SK-N-SH (cell line): ENCODE measurements at regions of chr15 and their contacts with region 1.

Region 1: DNA sequence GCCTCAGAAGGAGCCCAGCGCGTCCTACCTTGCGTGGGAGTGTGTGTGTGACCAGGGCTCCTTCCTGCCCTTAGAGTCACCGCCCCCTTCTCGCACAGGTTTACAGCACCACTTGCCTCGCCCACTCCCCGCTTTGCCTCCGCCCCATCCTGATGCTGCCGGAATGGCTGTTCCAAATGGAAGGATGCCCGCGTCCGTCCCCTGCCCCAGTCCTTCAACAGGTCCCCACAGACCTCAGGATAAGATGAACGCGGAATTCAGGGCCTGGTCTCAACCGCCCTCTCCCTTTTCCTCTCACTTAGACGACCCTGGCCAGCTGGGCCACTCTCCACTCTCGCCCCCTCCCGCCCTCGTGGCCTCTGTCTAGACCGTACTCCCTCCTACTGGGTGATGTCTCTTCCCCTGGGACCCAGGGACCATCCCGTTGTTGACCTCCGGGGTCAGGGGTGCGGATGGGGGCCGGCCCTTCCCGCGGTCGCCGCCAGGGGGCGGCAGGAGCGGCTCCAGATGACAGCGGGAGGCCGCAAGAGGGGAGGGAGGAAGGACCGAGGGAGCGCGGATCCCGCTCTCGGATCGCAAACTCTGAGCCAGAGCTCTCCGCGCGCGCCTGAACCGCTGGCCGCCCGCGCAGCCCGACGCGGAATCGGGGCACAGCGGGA is at the start of gene THSD4:
- DNase-seq: peak; percentile 96
- H3K4me3 ChIP-seq: peak within 1 kb of the TSS; percentile 61 to 87
- H3K27ac ChIP-seq: peak within 1 kb of the TSS; percentile 55 to 78
- H3K4me1 ChIP-seq: peaks cover 0 to 12% of the 10 kb centered on the region in 2 experiments; a peak in 1 of 4 replicates
- H3K27me3 ChIP-seq: no peaks in the 10 kb centered on the region
- CTCF ChIP-seq: peak; percentile 94
- EP300 ChIP-seq: 0 out of 4 replicates have a peak, but pooled peaks of 1 of the 2 experiments have one; percentile 11
- RAD21 ChIP-seq: peak; percentile 73
- polyA plus RNA-seq, gene THSD4: 64.8 and 79.1 TPM in 2 replicates

Region 2: DNA sequence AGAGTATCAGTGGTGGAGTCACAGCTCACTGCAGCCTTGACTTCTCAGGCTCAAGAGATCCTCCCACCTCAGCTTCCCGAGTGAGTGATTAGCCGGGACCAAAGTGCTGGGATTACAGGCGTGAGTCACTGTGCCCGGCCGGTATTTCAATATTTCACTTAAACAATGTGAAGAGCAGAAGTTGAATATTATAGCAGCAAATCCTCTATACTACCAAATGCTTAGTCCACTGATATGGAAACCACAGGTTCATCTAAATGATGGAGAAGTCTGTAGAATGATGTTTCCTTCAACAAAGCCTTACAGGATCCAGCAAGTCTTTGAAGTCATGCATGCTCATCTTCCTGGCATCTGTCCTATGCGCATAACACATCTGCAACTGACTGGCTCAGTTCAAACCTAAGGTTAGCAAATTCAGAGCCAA is 331.4 kb before region 1 on chr15:
- CTCF ChIA-PET with region 1: no interaction called
- POLR2A ChIA-PET with region 1: no interaction called
- DNase-seq: no peak
- H3K4me3 ChIP-seq: 0 out of 4 replicates have a peak overlapping the region, but pooled peaks of 1 of the 2 experiments have one; percentile 0
- H3K27ac ChIP-seq: peak overlapping the region in 1 of 2 experiments; percentile 51; a peak in 2 of 4 replicates
- H3K4me1 ChIP-seq: peaks cover 0 to 18% of the 10 kb centered on the region in 2 experiments; a peak in 2 of 4 replicates
- H3K27me3 ChIP-seq: no peaks in the 10 kb centered on the region
- CTCF ChIP-seq: no peak
- EP300 ChIP-seq: no peak
- RAD21 ChIP-seq: no peak

Region 3: GRCh38 chr15:71103102-71103676 is 11.8 kb before region 1 on chr15:
- CTCF ChIA-PET with region 1: interaction called, 18 read pairs
- POLR2A ChIA-PET with region 1: no interaction called
- DNase-seq: no peak
- H3K4me3 ChIP-seq: no peak overlapping the region
- H3K27ac ChIP-seq: no peak overlapping the region
- H3K4me1 ChIP-seq: no peaks in the 10 kb centered on the region
- H3K27me3 ChIP-seq: no peaks in the 10 kb centered on the region
- CTCF ChIP-seq: peak; percentile 52
- EP300 ChIP-seq: no peak
- RAD21 ChIP-seq: peak; percentile 38

Region 4: GRCh38 chr15:71125831-71126453 is 10.9 kb after region 1 on chr15:
- CTCF ChIA-PET with region 1: interaction called, 13 read pairs
- POLR2A ChIA-PET with region 1: no interaction called
- DNase-seq: peak; percentile 45
- H3K4me3 ChIP-seq: no peak overlapping the region; a peak in 1 of 4 replicates
- H3K27ac ChIP-seq: no peak overlapping the region
- H3K4me1 ChIP-seq: peaks cover 0 to 15% of the 10 kb centered on the region in 2 experiments; a peak in 2 of 4 replicates
- H3K27me3 ChIP-seq: no peaks in the 10 kb centered on the region
- CTCF ChIP-seq: peak; percentile 26
- EP300 ChIP-seq: no peak
- RAD21 ChIP-seq: no peak

Region 5: DNA sequence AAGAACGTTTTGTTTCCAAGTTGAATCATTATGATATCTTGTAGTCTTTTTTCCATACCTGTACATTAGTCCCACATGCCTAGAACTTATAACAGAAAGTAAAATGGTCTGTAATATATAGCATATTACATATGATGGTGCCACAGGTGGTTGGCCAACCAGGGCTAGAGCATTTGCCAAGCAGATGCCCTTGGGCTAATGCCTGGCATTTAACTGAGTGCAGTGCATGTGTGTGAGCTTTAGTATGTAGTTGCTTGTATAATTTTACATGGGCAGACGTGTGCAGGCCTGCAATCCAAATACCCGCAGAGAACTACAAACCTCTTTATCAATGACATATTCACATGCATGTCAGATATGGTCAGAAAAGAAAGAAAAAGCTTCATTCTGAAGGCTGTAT is 27.8 kb after region 1 on chr15:
- CTCF ChIA-PET with region 1: no interaction called
- POLR2A ChIA-PET with region 1: no interaction called
- DNase-seq: no peak
- H3K4me3 ChIP-seq: no peak overlapping the region
- H3K27ac ChIP-seq: no peak overlapping the region
- H3K4me1 ChIP-seq: no peaks in the 10 kb centered on the region
- H3K27me3 ChIP-seq: no peaks in the 10 kb centered on the region
- CTCF ChIP-seq: no peak
- EP300 ChIP-seq: no peak
- RAD21 ChIP-seq: no peak